PC-9 (cell line): ENCODE measurements at regions of chr6 and their contacts with region 1.

Region 1: GRCh38 chr6:25070547-25071366 is 135.0 kb upstream of the RIPOR2 start:
- DNase-seq: peak; percentile 67 to 76
- H3K4me3 ChIP-seq: no peak overlapping the region
- H3K27ac ChIP-seq: no peak overlapping the region
- H3K4me1 ChIP-seq: no peaks in the 10 kb centered on the region
- H3K27me3 ChIP-seq: no peaks in the 10 kb centered on the region
- CTCF ChIP-seq: peak; percentile 94

Region 2: GRCh38 chr6:24431045-24431451 is 639.7 kb before region 1 on chr6:
- CTCF ChIA-PET with region 1: no interaction called
- POLR2A ChIA-PET with region 1: no interaction called
- intact Hi-C with region 1: loop called (anchors 10 kb)
- DNase-seq: peak in 1 of 2 experiments; percentile 32
- H3K4me3 ChIP-seq: no peak overlapping the region
- H3K27ac ChIP-seq: no peak overlapping the region
- H3K4me1 ChIP-seq: peaks cover 20% of the 10 kb centered on the region
- H3K27me3 ChIP-seq: no peaks in the 10 kb centered on the region
- CTCF ChIP-seq: peak; percentile 88

Region 3: GRCh38 chr6:24699521-24700359 is 371.0 kb before region 1 on chr6:
- CTCF ChIA-PET with region 1: no interaction called
- POLR2A ChIA-PET with region 1: no interaction called
- intact Hi-C with region 1: loop called (anchors 5 kb)
- DNase-seq: no peak
- H3K4me3 ChIP-seq: no peak overlapping the region
- H3K27ac ChIP-seq: no peak overlapping the region
- H3K4me1 ChIP-seq: no peaks in the 10 kb centered on the region
- H3K27me3 ChIP-seq: no peaks in the 10 kb centered on the region
- CTCF ChIP-seq: no peak

Region 4: GRCh38 chr6:24774696-24775519 is 295.8 kb before region 1 on chr6 and contains the start of gene GMNN:
- CTCF ChIA-PET with region 1: no interaction called
- POLR2A ChIA-PET with region 1: no interaction called
- intact Hi-C with region 1: loop called (anchors 2 kb)
- DNase-seq: peak; percentile 83 to 96
- H3K4me3 ChIP-seq: peak within 1 kb of the TSS; percentile 72
- H3K27ac ChIP-seq: peak within 1 kb of the TSS; percentile 65
- H3K4me1 ChIP-seq: peaks cover 43% of the 10 kb centered on the region
- H3K27me3 ChIP-seq: no peaks in the 10 kb centered on the region
- CTCF ChIP-seq: no peak
- total RNA-seq, gene GMNN: 53.1 and 54.8 TPM in 2 replicates

Region 5: DNA sequence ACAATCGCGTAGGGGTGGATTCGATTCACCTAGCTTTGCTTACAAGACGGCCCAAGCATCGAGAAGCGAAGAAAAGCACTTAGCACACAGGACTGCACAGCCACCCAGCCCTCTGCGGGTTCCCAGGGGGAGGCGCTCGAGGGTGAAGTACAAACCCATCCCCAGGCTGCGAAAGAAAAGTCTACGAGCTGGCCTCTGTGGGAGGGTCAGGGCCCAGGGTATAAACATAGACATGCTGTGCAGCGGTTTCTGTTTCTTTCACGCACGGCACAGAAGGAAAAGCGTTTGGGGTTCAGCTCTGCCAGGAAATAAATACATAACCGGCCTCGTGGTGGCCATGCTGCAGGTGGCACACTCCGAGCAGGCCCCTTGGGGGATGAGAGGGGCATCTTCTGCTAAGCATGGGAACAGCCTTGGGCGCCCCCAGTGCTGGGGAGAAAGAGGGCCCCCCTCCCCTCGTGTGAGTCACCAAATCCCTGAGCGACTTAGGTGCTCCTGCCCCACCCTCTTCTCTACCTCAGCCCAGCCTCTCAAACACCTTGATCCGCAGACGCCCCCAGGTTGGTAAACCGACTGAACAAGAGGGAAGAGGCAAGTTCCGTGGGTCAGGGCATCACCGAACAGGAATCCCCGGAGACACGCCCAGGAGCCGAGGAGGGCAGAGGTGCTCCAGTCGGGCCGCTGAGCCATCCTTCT is 43.4 kb before region 1 on chr6:
- CTCF ChIA-PET with region 1: interaction called, 12 read pairs
- POLR2A ChIA-PET with region 1: no interaction called
- intact Hi-C with region 1: loop called (anchors 2 kb)
- DNase-seq: peak in 1 of 2 experiments; percentile 51
- H3K4me3 ChIP-seq: no peak overlapping the region
- H3K27ac ChIP-seq: no peak overlapping the region
- H3K4me1 ChIP-seq: peaks cover 4% of the 10 kb centered on the region
- H3K27me3 ChIP-seq: no peaks in the 10 kb centered on the region
- CTCF ChIP-seq: no peak